PC-9 (cell line): ENCODE measurements at regions of chr17 and their contacts with region 1.

Region 1: DNA sequence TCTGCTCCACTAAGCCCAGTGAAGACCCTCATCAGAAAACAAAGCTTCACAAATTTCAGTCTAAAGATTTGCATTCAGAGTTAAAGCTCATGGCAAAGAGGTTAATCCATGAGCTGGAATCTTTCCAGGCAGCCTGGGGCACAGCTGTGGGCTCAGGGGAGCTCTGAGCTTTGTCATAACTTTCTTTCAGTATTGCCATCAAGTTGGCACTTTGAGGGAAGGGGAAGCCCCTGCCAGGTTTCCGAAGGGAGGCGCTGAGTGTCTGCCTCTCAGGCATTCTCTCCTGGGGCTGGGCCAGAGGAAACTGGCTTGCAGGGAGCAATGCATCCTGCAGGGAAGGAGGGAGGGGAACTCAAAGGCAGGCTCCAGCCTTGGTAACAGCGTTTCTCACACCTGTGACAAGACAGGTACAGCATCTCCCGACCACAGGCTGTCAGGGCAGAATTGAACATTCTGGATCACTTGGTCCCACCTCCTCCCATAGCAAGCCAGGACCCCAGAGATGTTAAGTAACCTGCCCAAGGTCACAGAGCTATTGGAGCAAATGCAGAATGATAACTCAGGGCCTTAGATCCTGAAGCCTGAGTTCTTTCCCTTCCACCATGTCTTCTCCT is 3.9 kb downstream of the LPO start:
- DNase-seq: no peak
- H3K4me3 ChIP-seq: no peak overlapping the region
- H3K27ac ChIP-seq: no peak overlapping the region
- H3K4me1 ChIP-seq: no peaks in the 10 kb centered on the region
- H3K27me3 ChIP-seq: peaks cover 96% of the 10 kb centered on the region
- CTCF ChIP-seq: no peak

Region 2: GRCh38 chr17:57868007-57868909 is 374.0 kb before region 1 on chr17:
- CTCF ChIA-PET with region 1: no interaction called
- POLR2A ChIA-PET with region 1: no interaction called
- intact Hi-C with region 1: no loop called
- DNase-seq: peak; percentile 79 to 82
- H3K4me3 ChIP-seq: no peak overlapping the region
- H3K27ac ChIP-seq: peak overlapping the region; percentile 7; the same call in 1 of the 2 replicates
- H3K4me1 ChIP-seq: peaks cover 17% of the 10 kb centered on the region
- H3K27me3 ChIP-seq: no peaks in the 10 kb centered on the region
- CTCF ChIP-seq: no peak; the same call in 1 of the 2 replicates

Region 3: DNA sequence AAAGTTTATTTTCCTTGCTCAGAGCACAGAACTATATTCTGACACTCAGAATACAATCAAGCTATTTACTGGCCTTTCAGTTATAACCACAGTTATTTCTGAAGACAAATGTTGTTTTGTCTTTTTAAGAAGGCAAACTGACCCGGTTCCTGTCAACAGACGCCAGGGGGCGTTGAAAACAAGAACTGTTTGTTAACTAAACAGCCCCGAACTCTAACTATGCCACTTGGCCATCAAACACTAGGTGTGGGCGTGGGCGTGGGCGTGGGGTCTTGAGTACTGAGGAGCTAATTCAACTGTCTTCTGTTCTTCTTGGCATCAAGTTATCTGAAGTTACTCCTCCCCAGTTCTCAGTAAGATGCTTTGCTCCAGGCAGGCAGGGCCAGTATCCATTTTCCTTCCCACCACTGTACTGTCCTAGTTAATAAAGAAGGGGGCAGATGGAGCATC is 335.4 kb after region 1 on chr17:
- CTCF ChIA-PET with region 1: no interaction called
- POLR2A ChIA-PET with region 1: no interaction called
- intact Hi-C with region 1: no loop called
- DNase-seq: peak; percentile 24 to 44
- H3K4me3 ChIP-seq: no peak overlapping the region
- H3K27ac ChIP-seq: no peak overlapping the region
- H3K4me1 ChIP-seq: peaks cover 15% of the 10 kb centered on the region
- H3K27me3 ChIP-seq: no peaks in the 10 kb centered on the region
- CTCF ChIP-seq: peak; percentile 83

Region 4: GRCh38 chr17:58755577-58756245 is 513.4 kb after region 1 on chr17 and contains the start of gene PPM1E:
- CTCF ChIA-PET with region 1: no interaction called
- POLR2A ChIA-PET with region 1: no interaction called
- intact Hi-C with region 1: loop called (anchors 5 kb)
- DNase-seq: peak; percentile 7 to 19
- H3K4me3 ChIP-seq: peak within 1 kb of the TSS; percentile 36; the same call in 1 of the 2 replicates
- H3K27ac ChIP-seq: no peak within 1 kb of the TSS
- H3K4me1 ChIP-seq: no peaks in the 10 kb centered on the region
- H3K27me3 ChIP-seq: peaks cover 45% of the 10 kb centered on the region
- CTCF ChIP-seq: no peak
- total RNA-seq, gene PPM1E: 0.04 and 0.05 TPM in 2 replicates

Region 5: DNA sequence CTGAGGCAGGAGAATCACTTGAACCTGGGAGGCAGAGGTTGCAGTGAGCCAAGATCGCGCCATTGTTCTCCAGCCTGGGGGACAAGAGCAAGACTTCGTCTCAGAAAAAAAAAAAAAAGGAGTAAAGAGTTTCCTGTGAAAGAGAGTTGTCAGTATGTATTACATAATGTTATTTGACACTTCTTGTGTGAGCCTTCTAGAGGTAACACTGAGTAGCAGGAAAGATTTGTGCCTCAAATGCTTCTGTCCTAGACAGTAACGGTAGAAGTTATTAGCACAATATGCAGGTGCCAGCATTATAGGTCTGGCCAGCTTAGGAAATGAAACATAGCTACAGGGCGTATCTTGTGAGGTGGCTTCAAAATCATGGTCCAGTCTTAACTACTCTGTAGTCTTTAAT is 1656.8 kb after region 1 on chr17:
- CTCF ChIA-PET with region 1: no interaction called
- POLR2A ChIA-PET with region 1: interaction called, 10 read pairs
- intact Hi-C with region 1: no loop called
- DNase-seq: no peak
- H3K4me3 ChIP-seq: no peak overlapping the region
- H3K27ac ChIP-seq: 0 out of 2 replicates have a peak overlapping the region, but pooled peaks have one; percentile 9
- H3K4me1 ChIP-seq: peaks cover 7% of the 10 kb centered on the region
- H3K27me3 ChIP-seq: no peaks in the 10 kb centered on the region
- CTCF ChIP-seq: no peak